AG04450 (cell line): ENCODE measurements at regions of chr5 and their contacts with region 1.

Region 1: DNA sequence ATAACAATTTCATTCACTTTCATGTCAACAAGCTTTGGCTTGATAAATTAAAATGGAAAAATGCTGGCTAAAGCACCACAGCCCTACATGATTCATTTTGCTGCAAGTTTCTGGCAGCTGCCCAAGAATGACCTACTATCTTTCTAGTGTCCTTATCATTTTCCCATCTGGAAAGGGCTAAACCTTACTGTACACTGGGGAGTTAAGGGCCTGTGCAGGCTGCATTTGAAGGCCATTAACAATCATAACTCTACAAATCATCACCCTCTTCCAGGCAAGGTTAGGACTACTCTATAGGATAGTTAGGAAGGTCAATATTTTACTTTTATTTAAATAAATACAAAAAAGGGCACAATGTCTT is 579.7 kb upstream of the ZNF608 start:
- DNase-seq: peak; percentile 55
- H3K4me3 ChIP-seq: no peak overlapping the region
- H3K27ac ChIP-seq: no peak overlapping the region
- H3K27me3 ChIP-seq: no peaks in the 10 kb centered on the region
- CTCF ChIP-seq: no peak

Region 2: DNA sequence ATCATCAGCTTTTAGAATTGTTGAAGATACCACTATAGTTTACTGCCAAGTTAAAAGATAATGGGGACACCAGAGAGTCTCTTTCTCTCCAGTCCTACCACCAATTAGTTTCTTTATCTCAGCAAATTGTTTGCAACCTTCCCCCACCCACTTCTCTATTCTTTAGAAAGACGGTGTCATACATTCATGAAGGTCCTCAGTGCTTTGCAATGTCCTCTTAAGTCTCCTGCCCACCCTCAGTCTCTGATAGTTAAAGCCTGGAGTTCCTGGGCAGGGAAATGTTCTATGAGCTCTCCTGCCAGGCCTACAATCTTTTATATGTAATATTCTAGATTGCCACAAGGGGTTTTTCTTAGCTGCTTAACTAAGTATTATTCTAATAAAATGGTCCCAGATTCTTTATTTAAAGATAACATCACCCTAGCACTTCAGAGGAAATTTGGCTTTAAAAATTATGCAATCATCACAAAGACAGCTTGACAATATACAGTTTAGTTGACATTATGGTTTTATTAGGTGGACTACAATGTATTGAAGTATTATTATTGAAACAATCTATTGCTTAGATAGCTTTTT is 1305.0 kb before region 1 on chr5:
- CTCF ChIA-PET with region 1: interaction called, 11 read pairs
- POLR2A ChIA-PET with region 1: no interaction called
- DNase-seq: no peak
- H3K4me3 ChIP-seq: no peak overlapping the region
- H3K27ac ChIP-seq: no peak overlapping the region
- H3K27me3 ChIP-seq: no peaks in the 10 kb centered on the region
- CTCF ChIP-seq: no peak

Region 3: GRCh38 chr5:125338440-125339174 is 12.5 kb after region 1 on chr5:
- CTCF ChIA-PET with region 1: interaction called, 15 read pairs
- POLR2A ChIA-PET with region 1: no interaction called
- DNase-seq: no peak
- H3K4me3 ChIP-seq: no peak overlapping the region
- H3K27ac ChIP-seq: no peak overlapping the region
- H3K27me3 ChIP-seq: no peaks in the 10 kb centered on the region
- CTCF ChIP-seq: no peak